ENCODE measurements at regions of chr18 and their contacts with region 1.

Region 1: DNA sequence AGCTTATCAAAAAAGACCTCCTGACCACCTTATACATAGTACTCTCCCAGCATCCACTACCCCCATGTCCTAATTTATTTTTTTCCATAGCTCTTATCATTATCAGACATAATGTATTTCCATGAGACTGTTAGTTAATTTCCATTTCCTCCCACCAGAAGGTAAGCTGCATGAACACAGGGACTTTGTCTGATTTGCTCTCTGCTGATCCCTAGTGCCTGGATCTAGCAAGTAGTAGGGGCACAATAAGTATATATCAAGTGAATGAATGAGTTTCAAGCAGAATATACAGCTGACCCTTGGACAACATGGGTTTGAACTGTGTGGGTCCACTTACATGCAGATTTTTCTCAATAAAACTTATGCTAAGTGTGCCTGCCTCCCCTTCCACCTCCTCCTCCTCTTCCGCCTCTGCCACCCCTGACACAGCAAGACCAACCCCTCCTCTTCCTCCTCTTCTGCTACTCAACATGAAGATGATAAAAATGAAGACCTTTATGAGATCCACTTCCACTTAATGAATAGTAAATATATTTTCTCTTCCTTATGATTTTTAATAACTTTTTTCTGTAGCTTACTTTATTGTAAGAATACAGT is 53.8 kb downstream of the CTAGE1 start:
- DNase-seq: no peak
- CTCF ChIP-seq: no peak

Region 2: DNA sequence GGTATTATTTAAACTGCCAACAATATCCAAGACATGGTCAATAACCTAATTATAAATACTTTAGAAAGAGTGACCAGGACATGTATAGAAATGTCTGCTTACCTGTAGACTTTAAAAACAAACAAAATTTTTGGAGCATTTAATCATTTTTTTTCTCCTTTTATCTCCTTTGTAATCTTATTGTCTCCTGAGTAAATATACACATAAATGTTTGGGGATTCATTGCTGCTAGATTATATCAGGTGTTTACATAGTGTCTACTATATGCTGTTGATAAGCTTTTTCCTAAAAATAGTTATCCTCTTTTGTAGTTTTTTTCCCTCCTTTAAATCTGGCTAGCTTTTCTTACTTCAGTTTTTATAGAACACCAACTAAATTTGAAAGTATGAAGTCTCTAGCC is 498.2 kb before region 1 on chr18:
- in situ Hi-C with region 1: no loop called
- DNase-seq: no peak
- CTCF ChIP-seq: no peak

Region 3: GRCh38 chr18:22250591-22250996 is 113.4 kb before region 1 on chr18:
- in situ Hi-C with region 1: loop called (anchors 25 kb)
- DNase-seq: no peak
- CTCF ChIP-seq: no peak

Region 4: DNA sequence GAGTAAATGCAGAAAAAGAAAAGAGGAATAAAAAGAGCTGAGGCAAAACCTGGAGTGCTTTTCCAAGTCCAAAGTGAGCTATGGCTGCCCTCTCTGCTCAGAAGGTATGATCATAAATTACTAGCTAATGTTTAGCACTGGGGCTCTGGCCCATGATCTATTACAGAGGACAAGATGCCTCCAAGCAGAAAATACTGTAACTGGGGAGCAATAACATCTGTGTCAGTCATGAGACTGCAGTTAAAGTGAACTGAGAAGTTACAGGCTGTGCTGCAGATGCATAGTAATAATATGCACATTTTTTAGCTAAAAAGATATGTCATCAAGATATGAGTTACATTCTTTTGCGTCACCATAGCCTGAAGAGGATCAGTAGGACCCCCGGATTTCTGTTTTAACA is 359.8 kb after region 1 on chr18:
- in situ Hi-C with region 1: no loop called
- DNase-seq: no peak
- CTCF ChIP-seq: no peak

Measured in GM13976 (cell line).